ENCODE measurements at regions of chr10 and their contacts with region 1.

Region 1: GRCh38 chr10:46556515-46557315 is at the start of gene GPRIN2:
- DNase-seq: peak; percentile 56
- H3K4me3 ChIP-seq: peak within 1 kb of the TSS; percentile 38 to 48
- H3K27ac ChIP-seq: peak within 1 kb of the TSS; percentile 3 to 42
- H3K4me1 ChIP-seq: peaks cover 7% of the 10 kb centered on the region
- H3K27me3 ChIP-seq: no peaks in the 10 kb centered on the region
- CTCF ChIP-seq: no peak
- POLR2A ChIP-seq: peak; percentile 56
- total RNA-seq, gene GPRIN2: 4.3 to 16.9 TPM

Region 2: DNA sequence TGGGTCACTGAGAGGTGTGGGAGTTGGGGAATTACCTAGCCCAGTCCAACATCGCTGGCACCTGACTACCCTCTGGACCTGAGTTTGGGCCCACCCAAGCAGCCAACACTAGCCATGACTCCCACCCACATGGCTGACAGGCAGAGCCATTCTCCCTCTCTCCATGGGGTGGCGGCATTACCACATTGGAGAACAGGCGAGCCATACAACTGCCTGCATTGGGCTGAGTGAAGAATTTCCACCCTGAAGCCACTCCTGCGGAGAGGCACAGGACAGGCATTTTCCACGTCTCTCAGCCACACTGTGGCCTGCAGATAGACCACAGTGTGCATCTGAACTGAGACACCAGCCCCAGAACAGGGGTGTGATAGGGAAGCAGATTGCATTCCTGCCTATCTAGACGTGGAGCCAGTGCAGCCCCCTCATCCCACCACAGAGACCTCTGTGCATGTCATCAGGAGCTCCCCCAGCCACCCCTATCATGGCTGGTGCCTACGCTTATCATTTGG is 328.1 kb before region 1 on chr10:
- intact Hi-C with region 1: loop called (anchors 10 kb)
- DNase-seq: peak; percentile 65
- H3K4me3 ChIP-seq: no peak overlapping the region
- H3K27ac ChIP-seq: no peak overlapping the region
- H3K4me1 ChIP-seq: no peaks in the 10 kb centered on the region
- H3K27me3 ChIP-seq: no peaks in the 10 kb centered on the region
- CTCF ChIP-seq: peak; percentile 64 to 92 (median 82)
- POLR2A ChIP-seq: no peak

Region 3: GRCh38 chr10:46268076-46268881 is 288.4 kb before region 1 on chr10:
- intact Hi-C with region 1: no loop called
- DNase-seq: no peak
- H3K4me3 ChIP-seq: no peak overlapping the region
- H3K27ac ChIP-seq: no peak overlapping the region
- H3K4me1 ChIP-seq: no peaks in the 10 kb centered on the region
- H3K27me3 ChIP-seq: no peaks in the 10 kb centered on the region
- CTCF ChIP-seq: no peak
- POLR2A ChIP-seq: no peak

Region 4: GRCh38 chr10:46787321-46787615 is 230.6 kb after region 1 on chr10:
- intact Hi-C with region 1: no loop called
- DNase-seq: peak; percentile 13
- H3K4me3 ChIP-seq: peak overlapping the region; percentile 46 to 49
- H3K27ac ChIP-seq: peak overlapping the region; percentile 66 to 71
- H3K4me1 ChIP-seq: no peaks in the 10 kb centered on the region
- H3K27me3 ChIP-seq: no peaks in the 10 kb centered on the region
- CTCF ChIP-seq: no peak
- POLR2A ChIP-seq: no peak

Measured in prostate gland (tissue), 2 donors.